H1 (cell line): ENCODE measurements at regions of chr1 and their contacts with region 1.

Region 1: GRCh38 chr1:28736450-28737306 is at the start of gene YTHDF2:
- DNase-seq: peak; percentile 94 to 97
- H3K4me3 ChIP-seq: peak within 1 kb of the TSS; percentile 88 to 97 (median 94)
- H3K27ac ChIP-seq: peak within 1 kb of the TSS; percentile 98
- H3K4me1 ChIP-seq: peaks cover 0 to 11% (median 3%) of the 10 kb centered on the region in 4 experiments; a peak in 6 of 7 replicates
- H3K27me3 ChIP-seq: no peaks in the 10 kb centered on the region
- CTCF ChIP-seq: peak; percentile 73 to 84 (median 83)
- EP300 ChIP-seq: peak in 1 of 2 experiments; percentile 76; a peak in 1 of 3 replicates
- POLR2A ChIP-seq: peak; percentile 27 to 91
- RAD21 ChIP-seq: peak; percentile 29 to 34
- total RNA-seq, gene YTHDF2: 159 and 164 TPM in 2 replicates

Region 2: DNA sequence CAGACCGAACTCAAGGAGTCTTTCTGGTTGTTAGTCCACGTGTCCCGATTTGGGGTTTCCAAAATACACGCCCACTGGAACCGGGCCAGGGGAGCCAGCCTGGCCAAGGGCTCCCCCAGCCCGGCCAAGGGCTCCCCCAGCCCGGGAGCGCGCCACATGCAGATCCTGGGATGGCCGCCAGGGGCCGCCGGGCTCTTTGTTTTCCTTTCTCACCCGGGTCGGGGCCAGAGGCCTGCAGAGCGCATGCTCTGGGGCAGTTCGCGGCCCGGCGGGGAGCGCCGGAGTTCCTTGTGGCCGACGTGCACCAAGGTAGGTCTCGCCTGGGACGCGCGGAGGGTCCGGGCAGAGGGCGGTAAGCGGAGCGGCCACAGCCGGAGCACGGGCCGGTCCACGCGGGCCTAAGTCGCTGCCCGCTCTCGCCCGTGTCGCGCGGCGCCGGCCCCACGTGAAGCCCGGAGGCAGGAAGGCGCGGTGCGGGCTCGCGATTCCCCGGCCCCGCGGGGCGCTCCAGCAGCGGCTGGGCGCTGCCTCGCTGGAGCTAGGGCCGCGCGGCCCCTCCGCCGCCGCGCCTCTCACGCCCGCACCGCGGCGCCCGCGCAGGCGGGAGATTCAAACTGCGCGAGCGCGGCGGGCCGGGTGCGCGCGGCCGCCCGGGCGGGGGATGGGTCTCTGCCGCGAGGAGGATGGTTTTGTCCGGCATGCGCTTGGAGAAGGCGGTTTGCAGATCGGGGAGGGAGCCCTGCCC is 218.5 kb before region 1 on chr1:
- CTCF ChIA-PET with region 1: no interaction called
- POLR2A ChIA-PET with region 1: interaction called, 10 read pairs
- DNase-seq: peak in 1 of 2 experiments; percentile 98
- H3K4me3 ChIP-seq: peak overlapping the region; percentile 66 to 83 (median 78)
- H3K27ac ChIP-seq: peak overlapping the region; percentile 95
- H3K4me1 ChIP-seq: peaks cover 7 to 16% (median 11%) of the 10 kb centered on the region in 4 experiments
- H3K27me3 ChIP-seq: no peaks in the 10 kb centered on the region
- CTCF ChIP-seq: peak; percentile 73 to 91 (median 88)
- EP300 ChIP-seq: peak in 1 of 2 experiments; percentile 43; a peak in 1 of 3 replicates
- POLR2A ChIP-seq: peak; percentile 82 to 84; a peak in 2 of 3 replicates
- RAD21 ChIP-seq: peak; percentile 75 to 87

Region 3: GRCh38 chr1:28648474-28649198 is 88.0 kb before region 1 on chr1 and contains the start of gene RNU11:
- CTCF ChIA-PET with region 1: interaction called, 6 read pairs
- POLR2A ChIA-PET with region 1: interaction called, 38 read pairs
- DNase-seq: peak; percentile 75 to 90
- H3K4me3 ChIP-seq: peak within 1 kb of the TSS; percentile 41 to 57 (median 45)
- H3K27ac ChIP-seq: peak within 1 kb of the TSS; percentile 99
- H3K4me1 ChIP-seq: peaks cover 0 to 4% (median 0%) of the 10 kb centered on the region in 4 experiments; a peak in 4 of 7 replicates
- H3K27me3 ChIP-seq: no peaks in the 10 kb centered on the region
- CTCF ChIP-seq: no peak
- EP300 ChIP-seq: peak in 1 of 2 experiments; percentile 73; a peak in 2 of 3 replicates
- POLR2A ChIP-seq: peak; percentile 100
- RAD21 ChIP-seq: 0 out of 4 replicates have a peak, but pooled peaks of 1 of the 2 experiments have one; percentile 8
- total RNA-seq, gene RNU11: not detected in 2 replicates

Region 4: DNA sequence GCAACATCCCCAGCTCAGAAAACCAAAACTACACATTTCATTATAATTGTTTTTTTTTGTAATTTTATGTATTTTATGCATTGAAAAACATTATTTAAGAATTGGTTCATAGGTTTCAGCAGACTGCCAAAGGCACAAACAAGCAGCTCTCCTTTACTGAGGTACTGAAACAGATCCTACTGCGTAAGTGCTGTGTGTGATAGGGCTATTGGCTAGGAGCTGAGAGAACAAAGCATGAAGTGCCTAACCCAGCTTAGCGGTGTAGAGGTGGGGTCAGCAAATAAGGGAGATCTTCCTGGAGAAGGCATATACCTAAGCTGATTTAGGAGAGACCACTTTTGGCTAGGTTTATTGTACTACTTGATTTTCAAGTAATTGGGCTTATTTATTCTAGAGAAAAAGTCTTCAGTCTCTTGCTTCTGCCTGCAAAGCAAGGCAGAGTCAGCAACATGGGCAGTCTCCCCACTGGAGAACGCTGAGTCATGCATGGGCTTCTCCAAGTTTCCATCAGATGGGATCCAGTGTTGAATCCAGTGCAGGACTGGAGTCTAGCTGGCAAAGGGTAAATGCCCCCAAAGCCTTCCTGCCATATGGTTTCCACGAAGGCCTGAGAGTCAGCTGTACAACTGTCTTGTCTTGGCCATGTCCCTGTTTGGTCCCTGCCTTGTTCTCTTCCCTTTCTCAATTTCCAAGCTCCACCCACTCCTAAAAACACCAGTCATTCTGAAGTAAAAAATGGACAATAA is 17.9 kb before region 1 on chr1:
- CTCF ChIA-PET with region 1: no interaction called
- POLR2A ChIA-PET with region 1: interaction called, 185 read pairs
- DNase-seq: no peak
- H3K4me3 ChIP-seq: no peak overlapping the region
- H3K27ac ChIP-seq: no peak overlapping the region
- H3K4me1 ChIP-seq: no peaks in the 10 kb centered on the region
- H3K27me3 ChIP-seq: no peaks in the 10 kb centered on the region
- CTCF ChIP-seq: no peak
- EP300 ChIP-seq: no peak
- POLR2A ChIP-seq: no peak
- RAD21 ChIP-seq: no peak

Region 5: DNA sequence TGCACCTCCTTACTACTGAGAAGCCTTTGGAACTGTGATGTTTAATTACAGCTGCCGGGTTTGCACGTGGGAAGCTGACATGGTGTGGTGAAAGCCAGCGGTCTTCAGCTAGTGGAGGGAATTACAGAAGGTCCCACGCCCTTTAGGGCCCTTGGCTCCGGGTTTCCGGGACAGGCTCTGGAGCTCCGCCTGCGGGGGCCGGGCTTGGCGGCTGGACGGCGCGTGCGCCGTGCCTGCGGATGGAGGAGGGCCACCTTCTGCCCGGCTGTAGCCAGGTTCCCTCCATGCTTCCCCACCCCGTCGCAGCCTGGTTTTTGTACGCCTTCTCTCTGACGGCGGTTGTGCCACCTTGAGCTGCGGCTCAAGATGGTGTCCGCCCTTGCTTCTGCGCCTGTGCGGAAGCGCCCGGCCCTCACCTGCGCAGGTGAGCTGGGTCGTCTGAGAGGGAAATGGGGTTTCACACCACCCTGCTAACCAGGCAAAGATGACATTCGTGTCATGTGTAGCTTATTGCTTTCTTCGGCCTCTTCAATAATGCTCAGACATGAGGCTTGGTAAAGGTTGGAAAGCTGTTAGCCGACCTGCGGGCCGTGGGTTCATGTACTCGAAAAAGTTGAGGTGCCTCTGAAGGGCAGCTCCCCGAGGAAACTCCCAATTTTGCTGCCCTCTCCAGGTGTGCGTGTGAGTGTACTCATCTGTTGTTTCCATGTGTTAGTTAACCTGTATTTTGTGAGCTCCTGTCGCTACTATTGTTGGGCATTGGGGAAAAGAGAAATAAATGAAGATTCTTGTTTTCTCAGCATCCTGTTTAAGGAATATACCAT is 38.7 kb after region 1 on chr1:
- CTCF ChIA-PET with region 1: interaction called, 6 read pairs
- POLR2A ChIA-PET with region 1: interaction called, 17 read pairs
- DNase-seq: peak in 1 of 2 experiments; percentile 67
- H3K4me3 ChIP-seq: no peak overlapping the region
- H3K27ac ChIP-seq: no peak overlapping the region
- H3K4me1 ChIP-seq: no peaks in the 10 kb centered on the region
- H3K27me3 ChIP-seq: no peaks in the 10 kb centered on the region
- CTCF ChIP-seq: no peak
- EP300 ChIP-seq: no peak
- POLR2A ChIP-seq: no peak
- RAD21 ChIP-seq: no peak

Region 6: GRCh38 chr1:28804071-28804470 is 67.4 kb after region 1 on chr1:
- CTCF ChIA-PET with region 1: no interaction called
- POLR2A ChIA-PET with region 1: no interaction called
- DNase-seq: no peak
- H3K4me3 ChIP-seq: no peak overlapping the region
- H3K27ac ChIP-seq: no peak overlapping the region
- H3K4me1 ChIP-seq: peaks cover 0 to 3% (median 0%) of the 10 kb centered on the region in 4 experiments; a peak in 4 of 7 replicates
- H3K27me3 ChIP-seq: no peaks in the 10 kb centered on the region
- CTCF ChIP-seq: no peak
- EP300 ChIP-seq: no peak
- POLR2A ChIP-seq: no peak
- RAD21 ChIP-seq: no peak